ENCODE measurements at regions of chr1 and their contacts with region 1.

Region 1: GRCh38 chr1:2194898-2195673 is 514 bp upstream of the FAAP20 start:
- DNase-seq: peak; percentile 92
- ATAC-seq: peak; percentile 73
- H3K4me3 Mint-ChIP-seq: peak overlapping the region; percentile 79
- H3K27ac Mint-ChIP-seq: peak overlapping the region; percentile 80; the same call in 1 of the 2 replicates
- H3K4me1 Mint-ChIP-seq: peaks cover 14% of the 10 kb centered on the region
- H3K27me3 Mint-ChIP-seq: no peaks in the 10 kb centered on the region; the same call in 1 of the 2 replicates
- CTCF ChIP-seq: peak; percentile 47; the same call in 1 of the 2 replicates

Region 2: GRCh38 chr1:1873186-1873585 is 321.9 kb before region 1 on chr1:
- CTCF ChIA-PET with region 1: no interaction called
- POLR2A ChIA-PET with region 1: no interaction called
- DNase-seq: no peak
- ATAC-seq: no peak
- H3K4me3 Mint-ChIP-seq: no peak overlapping the region
- H3K27ac Mint-ChIP-seq: peak overlapping the region; percentile 65; the same call in 1 of the 2 replicates
- H3K4me1 Mint-ChIP-seq: peaks cover 24% of the 10 kb centered on the region
- H3K27me3 Mint-ChIP-seq: no peaks in the 10 kb centered on the region
- CTCF ChIP-seq: no peak

Region 3: DNA sequence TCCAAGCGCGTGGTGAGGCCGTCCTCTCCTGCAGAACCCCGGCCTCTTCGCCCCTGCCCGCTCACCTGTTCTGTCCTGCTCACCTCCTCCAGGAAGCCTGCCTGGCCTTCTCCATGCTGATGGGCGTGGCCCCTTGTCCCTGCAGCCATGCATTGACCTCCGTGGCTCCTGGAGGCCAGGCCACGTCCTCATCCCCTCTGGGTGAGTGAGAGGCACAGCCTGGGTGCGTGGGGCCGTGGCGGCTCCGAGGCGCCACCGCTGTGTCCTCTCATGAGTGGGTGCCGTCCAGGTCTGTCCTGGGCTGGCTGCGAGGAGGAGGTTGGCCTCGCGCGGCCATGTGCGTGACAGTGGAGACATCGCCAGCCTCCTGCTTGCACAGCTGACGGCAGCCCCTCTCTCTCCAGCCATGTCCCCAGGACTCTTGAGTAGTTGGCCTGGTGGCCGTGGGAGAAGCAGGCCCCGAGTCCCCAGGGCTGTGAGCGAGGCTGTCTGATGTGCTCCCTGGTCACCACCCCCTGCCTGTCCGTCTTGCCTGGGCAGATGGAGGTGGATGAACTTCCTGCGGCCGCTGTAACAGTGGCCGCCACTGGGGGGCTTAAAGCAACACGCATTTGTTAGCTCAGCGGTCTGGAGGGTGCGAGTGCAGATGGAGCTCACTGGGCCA is 86.7 kb before region 1 on chr1:
- CTCF ChIA-PET with region 1: no interaction called
- POLR2A ChIA-PET with region 1: no interaction called
- DNase-seq: peak; percentile 81
- ATAC-seq: peak; percentile 83
- H3K4me3 Mint-ChIP-seq: no peak overlapping the region
- H3K27ac Mint-ChIP-seq: no peak overlapping the region
- H3K4me1 Mint-ChIP-seq: peaks cover 7% of the 10 kb centered on the region
- H3K27me3 Mint-ChIP-seq: no peaks in the 10 kb centered on the region
- CTCF ChIP-seq: peak; percentile 37; the same call in 1 of the 2 replicates

Region 4: DNA sequence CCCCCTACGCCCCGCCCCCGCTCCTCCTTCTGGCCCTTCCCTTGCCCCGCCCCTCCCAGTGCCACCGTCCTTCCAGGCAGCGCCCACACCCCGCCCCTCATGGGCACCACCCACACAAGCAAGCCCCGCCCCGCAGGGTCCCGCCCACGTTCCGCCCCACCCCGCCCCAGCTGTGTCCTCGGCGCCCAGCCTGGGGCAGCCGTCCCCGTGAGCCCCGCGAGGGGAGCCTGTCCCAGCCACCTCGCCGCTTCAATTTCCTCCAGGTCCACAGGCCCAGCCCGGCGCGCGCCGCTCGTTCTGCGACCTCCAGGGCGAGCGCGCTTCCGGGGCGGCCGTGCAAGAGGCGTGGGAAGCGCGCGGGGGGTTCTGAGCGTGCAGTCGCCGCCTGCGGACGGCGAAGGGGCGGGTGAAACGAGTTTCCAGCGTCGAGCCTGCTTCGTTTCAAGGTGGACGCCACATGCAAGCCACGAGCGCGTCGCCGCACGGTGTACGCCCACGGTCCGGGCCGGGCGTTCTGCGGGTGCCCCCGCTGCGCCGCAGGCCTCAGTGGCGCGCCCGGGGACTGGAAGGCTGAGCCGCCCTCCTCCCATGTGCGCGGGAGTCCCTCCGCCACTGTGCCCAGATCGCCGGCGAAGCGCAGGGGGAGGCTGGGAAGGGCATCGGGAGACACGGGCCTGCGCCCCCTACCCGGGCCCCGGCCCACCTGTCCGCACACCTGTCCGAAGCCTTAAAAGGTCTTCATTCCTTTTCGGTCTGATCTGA is 10.3 kb after region 1 on chr1:
- CTCF ChIA-PET with region 1: interaction called, 46 read pairs
- POLR2A ChIA-PET with region 1: interaction called, 6 read pairs
- DNase-seq: peak; percentile 97
- ATAC-seq: peak; percentile 82
- H3K4me3 Mint-ChIP-seq: peak overlapping the region; percentile 55
- H3K27ac Mint-ChIP-seq: no peak overlapping the region
- H3K4me1 Mint-ChIP-seq: peaks cover 16% of the 10 kb centered on the region
- H3K27me3 Mint-ChIP-seq: peaks cover 15% of the 10 kb centered on the region
- CTCF ChIP-seq: no peak

Region 5: DNA sequence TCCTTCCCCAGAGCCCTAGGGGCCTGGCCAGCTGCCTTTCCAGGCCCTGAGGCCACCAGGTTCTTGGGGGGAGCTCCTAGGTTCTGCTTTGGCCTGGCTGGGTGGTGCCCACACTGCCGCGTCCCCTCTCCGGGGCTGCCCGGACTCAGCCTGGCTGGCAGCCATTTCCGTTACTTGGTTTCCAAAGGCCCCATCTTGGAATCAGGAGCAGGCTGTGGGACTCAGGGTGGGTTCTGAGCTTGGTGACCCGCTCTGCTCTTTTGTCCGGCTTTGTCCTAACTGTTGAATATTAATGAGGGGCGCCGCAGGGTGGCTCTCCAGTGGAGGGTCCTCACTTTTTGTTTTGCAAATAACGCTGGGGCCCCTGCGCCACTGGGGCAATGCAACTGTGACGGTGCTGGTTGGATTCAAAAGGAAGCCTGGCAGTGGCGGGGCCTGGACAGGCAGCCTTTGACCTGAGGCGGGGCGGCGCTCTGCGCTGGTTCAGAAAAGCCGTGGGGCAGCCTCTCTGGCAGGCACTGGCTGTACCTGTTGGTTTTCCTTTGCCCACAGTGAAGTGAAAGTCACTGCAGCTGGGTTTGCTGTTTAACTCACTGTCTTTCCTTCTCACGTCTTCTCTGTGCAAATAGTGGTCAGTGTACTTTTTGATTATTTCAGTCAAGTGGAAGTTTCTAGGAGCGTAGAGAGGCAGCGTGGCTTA is 53.2 kb after region 1 on chr1:
- CTCF ChIA-PET with region 1: interaction called, 13 read pairs
- POLR2A ChIA-PET with region 1: interaction called, 3 read pairs
- DNase-seq: peak; percentile 93
- ATAC-seq: peak; percentile 90
- H3K4me3 Mint-ChIP-seq: peak overlapping the region; percentile 55
- H3K27ac Mint-ChIP-seq: peak overlapping the region; percentile 85
- H3K4me1 Mint-ChIP-seq: peaks cover 70% of the 10 kb centered on the region
- H3K27me3 Mint-ChIP-seq: no peaks in the 10 kb centered on the region
- CTCF ChIP-seq: no peak

Region 6: GRCh38 chr1:2314803-2315673 is 120.0 kb after region 1 on chr1:
- CTCF ChIA-PET with region 1: interaction called, 42 read pairs
- POLR2A ChIA-PET with region 1: interaction called, 3 read pairs
- DNase-seq: peak; percentile 68
- ATAC-seq: peak; percentile 2
- H3K4me3 Mint-ChIP-seq: no peak overlapping the region
- H3K27ac Mint-ChIP-seq: no peak overlapping the region
- H3K4me1 Mint-ChIP-seq: peaks cover 8% of the 10 kb centered on the region
- H3K27me3 Mint-ChIP-seq: no peaks in the 10 kb centered on the region; the same call in 1 of the 2 replicates
- CTCF ChIP-seq: peak; percentile 100

Region 7: DNA sequence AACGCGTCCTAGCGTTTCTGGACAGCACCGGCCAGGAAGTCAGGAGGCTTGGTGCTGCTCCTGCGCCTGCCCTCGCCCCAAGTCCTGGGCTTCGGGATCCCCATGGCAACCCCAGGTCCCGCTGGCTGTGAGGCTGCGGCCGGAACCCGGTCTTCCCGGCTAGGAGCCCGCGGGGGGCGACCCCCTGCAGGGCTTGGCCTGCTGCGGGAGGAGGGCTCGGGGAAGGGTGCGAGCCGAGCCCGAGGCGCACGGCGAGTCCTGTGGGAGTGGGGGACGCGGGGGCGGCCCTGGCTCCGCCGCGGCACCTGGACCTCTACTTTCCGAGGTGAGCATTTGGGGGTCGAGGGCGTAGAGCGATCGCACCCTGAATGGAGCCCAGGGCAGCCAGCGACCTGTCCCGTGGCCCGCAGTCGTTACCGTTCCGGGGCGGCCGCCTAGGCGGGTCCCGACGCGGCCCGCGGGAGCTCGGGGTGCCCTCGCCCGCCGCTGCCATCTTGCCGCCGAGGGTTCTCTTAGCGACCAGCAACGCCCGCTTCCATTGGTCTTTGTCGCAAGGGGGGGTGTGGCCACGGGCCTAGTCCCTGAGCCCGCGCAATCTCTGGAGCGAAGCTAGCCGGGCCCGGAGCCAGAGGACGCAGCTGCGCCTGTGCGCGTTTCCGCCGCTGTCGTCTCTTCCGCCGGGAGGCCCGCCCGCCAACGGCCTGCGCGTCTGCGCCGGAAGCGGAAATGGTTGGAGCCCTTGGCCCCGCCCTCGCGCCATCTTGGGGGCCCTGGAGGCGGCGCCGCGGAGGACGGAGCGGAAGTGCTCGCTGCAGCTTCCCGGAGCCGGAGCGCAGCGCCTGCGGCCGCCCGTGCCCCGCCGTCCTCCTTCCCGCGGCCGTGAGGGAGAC is 196.2 kb after region 1 on chr1 and contains the starts of genes MORN1 and RER1:
- CTCF ChIA-PET with region 1: interaction called, 28 read pairs
- POLR2A ChIA-PET with region 1: no interaction called
- DNase-seq: peak; percentile 99
- ATAC-seq: peak; percentile 99
- H3K4me3 Mint-ChIP-seq: peak within 1 kb of the TSS; percentile 85
- H3K27ac Mint-ChIP-seq: peak within 1 kb of the TSS; percentile 60
- H3K4me1 Mint-ChIP-seq: peaks cover 17% of the 10 kb centered on the region
- H3K27me3 Mint-ChIP-seq: no peaks in the 10 kb centered on the region
- CTCF ChIP-seq: no peak
- total RNA-seq, gene MORN1: 14.5 to 19.7 TPM (median 18.5 TPM) in 3 replicates
- total RNA-seq, gene RER1: 72.1 to 80.4 TPM (median 79.8 TPM) in 3 replicates